T-cell (primary cell): ENCODE measurements at regions of chr20 and their contacts with region 1.

Region 1: GRCh38 chr20:20448881-20449280 is 81.0 kb downstream of the INSM1 start:
- DNase-seq: no peak
- ATAC-seq: no peak
- H3K4me3 ChIP-seq: no peak overlapping the region
- H3K4me3 Mint-ChIP-seq: no peak overlapping the region
- H3K27ac ChIP-seq: no peak overlapping the region
- H3K27ac Mint-ChIP-seq: no peak overlapping the region
- H3K4me1 ChIP-seq: peaks cover 0 to 7% of the 10 kb centered on the region in 2 experiments
- H3K4me1 Mint-ChIP-seq: peaks cover 18 to 19% (median 18%) of the 10 kb centered on the region in 3 donors
- H3K27me3 ChIP-seq: no peaks in the 10 kb centered on the region
- H3K27me3 Mint-ChIP-seq: no peaks in the 10 kb centered on the region

Region 2: GRCh38 chr20:20292472-20292871 is 156.4 kb before region 1 on chr20:
- CTCF ChIA-PET with region 1: no interaction called
- POLR2A ChIA-PET with region 1: no interaction called
- DNase-seq: no peak
- ATAC-seq: no peak
- H3K4me3 ChIP-seq: no peak overlapping the region
- H3K4me3 Mint-ChIP-seq: no peak overlapping the region
- H3K27ac ChIP-seq: no peak overlapping the region
- H3K27ac Mint-ChIP-seq: no peak overlapping the region
- H3K4me1 ChIP-seq: no peaks in the 10 kb centered on the region
- H3K4me1 Mint-ChIP-seq: no peaks in the 10 kb centered on the region
- H3K27me3 ChIP-seq: peaks cover 0 to 3% of the 10 kb centered on the region in 2 experiments
- H3K27me3 Mint-ChIP-seq: peaks cover 2 to 4% of the 10 kb centered on the region in 2 donors

Region 3: DNA sequence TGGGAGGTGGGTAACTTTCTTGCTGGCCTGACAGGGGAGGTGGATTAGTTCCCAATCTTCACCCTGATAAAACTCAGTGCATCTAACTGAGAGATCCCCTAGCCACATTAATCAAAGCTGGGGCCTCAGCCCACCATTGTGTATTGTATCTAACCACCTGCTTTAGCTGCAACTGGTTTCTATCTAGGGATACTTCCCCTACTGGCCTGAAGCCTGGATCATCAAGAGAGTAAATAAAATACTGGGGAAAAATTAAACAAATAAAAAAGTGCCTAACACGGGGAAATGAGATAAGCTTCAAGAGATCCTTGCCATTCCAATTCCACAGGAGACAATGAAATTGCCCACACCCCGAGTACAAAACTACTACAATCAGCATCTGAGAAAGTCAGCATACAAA is 68.4 kb after region 1 on chr20:
- CTCF ChIA-PET with region 1: interaction called in 1 of 2 experiments, 6 read pairs
- POLR2A ChIA-PET with region 1: interaction called in 1 of 2 experiments, 14 read pairs
- DNase-seq: no peak
- ATAC-seq: no peak
- H3K4me3 ChIP-seq: no peak overlapping the region
- H3K4me3 Mint-ChIP-seq: no peak overlapping the region
- H3K27ac ChIP-seq: no peak overlapping the region
- H3K27ac Mint-ChIP-seq: no peak overlapping the region
- H3K4me1 ChIP-seq: no peaks in the 10 kb centered on the region
- H3K4me1 Mint-ChIP-seq: no peaks in the 10 kb centered on the region
- H3K27me3 ChIP-seq: no peaks in the 10 kb centered on the region
- H3K27me3 Mint-ChIP-seq: no peaks in the 10 kb centered on the region